ENCODE measurements at regions of chr12 and their contacts with region 1.

Region 1: GRCh38 chr12:92130999-92131398 is 14.6 kb downstream of the BTG1 start:
- DNase-seq: peak; percentile 59
- H3K4me3 Mint-ChIP-seq: peak overlapping the region; percentile 82
- H3K27ac Mint-ChIP-seq: peak overlapping the region; percentile 94
- H3K4me1 Mint-ChIP-seq: peaks cover 68% of the 10 kb centered on the region
- H3K27me3 Mint-ChIP-seq: no peaks in the 10 kb centered on the region

Region 2: GRCh38 chr12:92078167-92079053 is 52.6 kb before region 1 on chr12:
- intact Hi-C with region 1: loop called (anchors 1 kb)
- DNase-seq: no peak
- H3K4me3 Mint-ChIP-seq: peak overlapping the region; percentile 7
- H3K27ac Mint-ChIP-seq: peak overlapping the region; percentile 82
- H3K4me1 Mint-ChIP-seq: peaks cover 43% of the 10 kb centered on the region
- H3K27me3 Mint-ChIP-seq: no peaks in the 10 kb centered on the region

Region 3: DNA sequence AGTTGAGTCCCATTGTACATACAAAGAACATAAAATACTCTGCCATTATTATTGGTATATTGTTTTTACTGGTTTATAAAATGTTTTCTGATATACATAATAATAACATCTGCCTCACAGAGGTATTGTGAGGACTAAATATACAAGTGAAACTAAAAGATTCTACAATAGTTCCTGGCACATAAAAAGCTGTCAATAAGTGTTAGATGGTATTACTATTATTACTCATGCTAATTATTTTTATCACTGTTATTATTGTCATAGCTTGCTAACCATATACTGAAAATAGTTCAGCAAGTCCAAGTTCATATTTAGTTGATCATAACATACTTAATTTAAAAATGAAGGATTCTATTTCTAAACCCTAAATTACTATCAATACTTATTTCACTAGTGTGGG is 19.7 kb before region 1 on chr12:
- intact Hi-C with region 1: loop called (anchors 2 kb)
- DNase-seq: no peak
- H3K4me3 Mint-ChIP-seq: peak overlapping the region; percentile 54
- H3K27ac Mint-ChIP-seq: no peak overlapping the region
- H3K4me1 Mint-ChIP-seq: peaks cover 48% of the 10 kb centered on the region
- H3K27me3 Mint-ChIP-seq: no peaks in the 10 kb centered on the region

Measured in activated CD4-positive, alpha-beta T cell treated with anti-CD3 and anti-CD28 coated beads, Interleukin-2, amount 10 ng/mL, durations not matched to agents 24 days and 14 days (primary cell).